Adrenal gland (tissue), 19 donors: ENCODE measurements at regions of chr9 and their contacts with region 1.

Region 1: GRCh38 chr9:9257999-9258498 is 1354.8 kb downstream of the PTPRD start:
- DNase-seq: no peak
- H3K4me3 ChIP-seq: no peak overlapping the region
- H3K27ac ChIP-seq: no peak overlapping the region
- H3K4me1 ChIP-seq: no peaks in the 10 kb centered on the region
- H3K27me3 ChIP-seq: no peaks in the 10 kb centered on the region
- CTCF ChIP-seq: no peak
- POLR2A ChIP-seq: no peak

Region 2: DNA sequence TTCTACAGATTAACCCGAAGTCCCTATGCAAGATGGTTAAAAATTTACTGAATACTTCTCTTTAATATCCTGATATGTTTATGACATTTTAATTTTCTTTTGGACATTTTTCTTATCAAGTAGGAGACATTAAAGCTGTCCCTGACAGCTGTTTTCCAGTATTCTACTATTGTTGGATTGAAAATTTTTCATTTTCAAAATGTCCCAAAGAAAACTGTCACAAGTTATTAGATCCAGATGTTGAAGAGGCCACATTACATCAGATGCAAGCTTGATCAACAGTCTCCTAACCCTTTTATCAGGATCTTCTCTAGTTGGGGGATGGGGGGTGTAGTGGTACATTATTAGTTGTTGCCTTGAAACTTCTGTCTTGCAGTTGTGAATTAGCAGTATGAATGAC is 55.8 kb before region 1 on chr9:
- intact Hi-C with region 1: loop called in 1 of 2 experiments (anchors 10 kb)
- DNase-seq: no peak
- H3K4me3 ChIP-seq: no peak overlapping the region
- H3K27ac ChIP-seq: no peak overlapping the region
- H3K4me1 ChIP-seq: no peaks in the 10 kb centered on the region
- H3K27me3 ChIP-seq: no peaks in the 10 kb centered on the region
- CTCF ChIP-seq: no peak
- POLR2A ChIP-seq: no peak